Tibial artery (tissue), 4 donors: ENCODE measurements at regions of chr17 and their contacts with region 1.

Region 1: GRCh38 chr17:43694077-43694870 is 32.6 kb upstream of the MEOX1 start:
- DNase-seq: peak; percentile 80 to 81
- H3K4me3 ChIP-seq: no peak overlapping the region
- H3K27ac ChIP-seq: peak overlapping the region in 1 of 2 donors; percentile 79
- H3K4me1 ChIP-seq: peaks cover 0 to 47% (median 36%) of the 10 kb centered on the region in 4 donors
- H3K27me3 ChIP-seq: no peaks in the 10 kb centered on the region
- CTCF ChIP-seq: peak; percentile 90 to 98

Region 2: GRCh38 chr17:43628089-43628650 is 66.1 kb before region 1 on chr17:
- intact Hi-C with region 1: no loop called
- DNase-seq: no peak
- H3K4me3 ChIP-seq: no peak overlapping the region
- H3K27ac ChIP-seq: no peak overlapping the region
- H3K4me1 ChIP-seq: no peaks in the 10 kb centered on the region
- H3K27me3 ChIP-seq: peaks cover 0 to 13% of the 10 kb centered on the region in 2 donors
- CTCF ChIP-seq: no peak

Region 3: GRCh38 chr17:43758497-43759174 is 64.4 kb after region 1 on chr17 and contains the start of gene SOST:
- intact Hi-C with region 1: loop called (anchors 2 kb)
- DNase-seq: peak in 1 of 2 donors; percentile 76
- H3K4me3 ChIP-seq: peak within 1 kb of the TSS; percentile 17 to 18
- H3K27ac ChIP-seq: peak within 1 kb of the TSS; percentile 61 to 76
- H3K4me1 ChIP-seq: peaks cover 8 to 70% (median 38%) of the 10 kb centered on the region in 4 donors
- H3K27me3 ChIP-seq: no peaks in the 10 kb centered on the region
- CTCF ChIP-seq: no peak

Region 4: GRCh38 chr17:43803758-43804157 is 109.5 kb after region 1 on chr17:
- intact Hi-C with region 1: no loop called
- DNase-seq: no peak
- H3K4me3 ChIP-seq: no peak overlapping the region
- H3K27ac ChIP-seq: no peak overlapping the region
- H3K4me1 ChIP-seq: no peaks in the 10 kb centered on the region
- H3K27me3 ChIP-seq: no peaks in the 10 kb centered on the region
- CTCF ChIP-seq: no peak

Region 5: DNA sequence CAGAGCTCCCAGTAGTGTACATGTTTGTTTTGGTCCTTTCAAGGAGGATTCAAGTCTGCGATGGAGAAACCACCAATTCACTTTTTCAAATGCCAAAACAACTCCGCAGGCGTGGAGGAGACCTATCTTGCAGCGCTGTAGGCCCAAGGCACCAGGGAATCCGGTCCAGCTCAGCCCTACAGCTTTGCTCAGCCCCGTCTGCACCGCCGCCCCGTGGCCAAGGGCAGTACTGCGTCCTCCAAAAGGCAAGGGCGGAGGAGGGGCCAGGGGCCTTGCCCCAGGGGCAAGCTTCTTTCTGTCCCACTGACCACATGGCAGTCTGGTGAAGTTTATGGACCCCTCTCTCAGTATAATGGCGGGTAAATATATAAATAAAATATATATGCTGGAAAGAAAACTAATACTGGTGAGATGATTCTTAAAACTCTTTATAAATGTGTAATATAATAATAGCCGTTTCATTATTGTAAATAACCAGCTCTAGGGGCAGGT is 152.0 kb after region 1 on chr17:
- intact Hi-C with region 1: loop called (anchors 10 kb)
- DNase-seq: peak; percentile 84 to 89
- H3K4me3 ChIP-seq: no peak overlapping the region
- H3K27ac ChIP-seq: peak overlapping the region in 1 of 2 donors; percentile 37
- H3K4me1 ChIP-seq: peaks cover 0 to 13% (median 6%) of the 10 kb centered on the region in 4 donors
- H3K27me3 ChIP-seq: no peaks in the 10 kb centered on the region
- CTCF ChIP-seq: peak; percentile 95 to 96